ENCODE measurements at regions of chr3 and their contacts with region 1.

Region 1: GRCh38 chr3:142850386-142851023 is 38.4 kb downstream of the PCOLCE2 start:
- DNase-seq: no peak
- ATAC-seq: peak; percentile 71

Region 2: GRCh38 chr3:142808103-142808917 is 42.2 kb before region 1 on chr3:
- intact Hi-C with region 1: no loop called
- DNase-seq: no peak
- ATAC-seq: no peak

Region 3: GRCh38 chr3:142888481-142889211 is 38.1 kb after region 1 on chr3 and contains the start of gene PCOLCE2:
- intact Hi-C with region 1: loop called (anchors 5 kb)
- DNase-seq: peak; percentile 75
- ATAC-seq: peak; percentile 78
- total RNA-seq, gene PCOLCE2: 64.1 TPM

Region 4: GRCh38 chr3:144463911-144464310 is 1613.4 kb after region 1 on chr3:
- intact Hi-C with region 1: no loop called
- DNase-seq: no peak
- ATAC-seq: no peak